CD8-positive, alpha-beta T cell (primary cell): ENCODE measurements at regions of chr22 and their contacts with region 1.

Region 1: DNA sequence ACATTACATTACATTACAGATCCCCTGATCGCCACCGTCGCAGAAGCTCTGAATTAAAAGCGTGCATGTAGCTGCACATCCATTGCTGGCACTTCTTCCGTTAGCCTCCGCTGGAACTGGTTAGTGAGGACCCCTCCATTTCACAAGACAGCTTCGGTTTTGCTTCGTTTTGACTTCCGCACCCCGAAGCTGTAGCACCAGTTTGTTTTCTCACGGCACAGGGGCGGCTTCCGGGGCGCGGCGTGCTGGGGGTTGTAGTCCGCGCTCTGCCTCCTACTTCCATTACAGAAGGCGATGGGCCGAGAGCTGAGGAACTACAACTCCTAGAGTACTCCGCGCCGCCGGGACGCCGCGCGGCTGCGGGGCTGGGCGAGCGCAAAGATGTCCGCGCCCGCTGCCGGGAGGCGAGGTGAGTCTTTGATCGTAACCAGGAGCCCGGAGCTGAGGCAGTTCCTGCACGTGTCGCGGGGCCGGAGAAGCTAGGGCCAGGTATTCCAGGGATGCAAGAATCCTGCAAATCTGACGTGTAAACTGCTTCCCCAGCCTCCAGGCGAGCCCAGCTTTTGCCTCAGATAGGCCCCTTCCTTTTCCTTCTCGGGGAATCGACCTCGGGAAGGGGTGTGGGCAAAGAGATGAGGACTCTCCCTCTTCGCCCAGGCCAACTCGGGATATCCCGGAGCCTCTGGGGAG is at the start of gene PEX26:
- DNase-seq: peak; percentile 91 to 98 (median 94)
- ATAC-seq: peak; percentile 97
- H3K4me3 ChIP-seq: peak within 1 kb of the TSS; percentile 89 to 99
- H3K4me3 Mint-ChIP-seq: peak within 1 kb of the TSS; percentile 98
- H3K27ac ChIP-seq: peak within 1 kb of the TSS; percentile 78 to 91
- H3K27ac Mint-ChIP-seq: peak within 1 kb of the TSS; percentile 100
- H3K4me1 ChIP-seq: peaks cover 30% of the 10 kb centered on the region
- H3K4me1 Mint-ChIP-seq: peaks cover 55% of the 10 kb centered on the region
- H3K27me3 ChIP-seq: no peaks in the 10 kb centered on the region
- H3K27me3 Mint-ChIP-seq: no peaks in the 10 kb centered on the region
- CTCF ChIP-seq: no peak
- total RNA-seq, gene PEX26: 22.5 to 23.0 TPM

Region 2: DNA sequence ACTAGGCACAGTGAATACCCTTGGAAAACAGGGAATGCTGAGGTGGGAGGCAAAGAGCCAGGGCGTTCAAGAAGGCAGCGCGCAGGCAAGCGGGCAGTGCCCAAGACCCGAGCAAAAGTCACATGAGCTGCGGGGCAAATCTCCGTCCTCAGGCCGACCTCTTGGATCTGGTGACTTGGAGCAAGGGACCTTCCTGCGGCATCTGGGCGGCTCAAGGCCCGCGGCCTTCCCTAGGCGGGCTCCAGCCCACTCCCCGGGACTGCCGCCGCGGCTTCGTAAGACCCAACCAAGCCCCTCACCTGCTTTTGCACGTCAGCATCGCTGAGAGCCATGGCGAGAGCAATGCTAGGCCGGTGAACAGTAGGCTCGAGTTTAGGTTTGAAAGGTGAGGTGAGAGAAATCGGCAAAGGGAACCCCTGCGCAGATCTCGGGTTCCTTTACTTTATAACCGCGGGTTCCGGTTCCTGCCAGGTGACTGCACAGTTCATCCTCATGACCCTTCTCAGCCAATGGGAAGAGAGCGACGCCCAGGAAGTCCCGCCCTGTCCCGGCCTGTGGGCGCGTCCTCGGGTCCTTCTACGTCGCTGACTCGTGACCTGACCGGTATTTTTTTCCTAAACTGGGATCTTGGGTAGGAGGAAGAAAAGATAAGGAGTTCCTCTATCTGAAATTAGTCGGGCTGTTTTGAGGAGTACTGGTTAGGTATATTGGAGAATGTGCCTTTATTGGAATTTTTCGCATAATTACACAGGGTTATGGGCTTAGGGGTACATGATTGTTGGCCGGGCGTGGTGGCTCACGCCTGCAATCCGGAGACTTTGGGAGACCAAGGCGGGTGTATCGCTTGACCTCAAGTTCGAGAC is 449.2 kb before region 1 on chr22 and contains the start of gene ATP6V1E1:
- CTCF ChIA-PET with region 1: no interaction called
- POLR2A ChIA-PET with region 1: no interaction called
- intact Hi-C with region 1: loop called in 1 of 2 experiments (anchors 2 kb)
- DNase-seq: peak; percentile 90 to 97 (median 94)
- ATAC-seq: peak; percentile 100
- H3K4me3 ChIP-seq: peak within 1 kb of the TSS; percentile 84 to 100
- H3K4me3 Mint-ChIP-seq: peak within 1 kb of the TSS; percentile 97
- H3K27ac ChIP-seq: peak within 1 kb of the TSS; percentile 93 to 94
- H3K27ac Mint-ChIP-seq: peak within 1 kb of the TSS; percentile 99
- H3K4me1 ChIP-seq: peaks cover 23% of the 10 kb centered on the region
- H3K4me1 Mint-ChIP-seq: peaks cover 33% of the 10 kb centered on the region
- H3K27me3 ChIP-seq: no peaks in the 10 kb centered on the region
- H3K27me3 Mint-ChIP-seq: no peaks in the 10 kb centered on the region
- CTCF ChIP-seq: no peak
- total RNA-seq, gene ATP6V1E1: 49.8 to 53.0 TPM

Region 3: GRCh38 chr22:17742527-17742902 is 335.3 kb before region 1 on chr22:
- CTCF ChIA-PET with region 1: interaction called, 7 read pairs
- POLR2A ChIA-PET with region 1: interaction called, 8 read pairs
- intact Hi-C with region 1: loop called in 1 of 2 experiments (anchors 1 kb)
- DNase-seq: peak; percentile 44 to 83 (median 67)
- ATAC-seq: peak; percentile 85
- H3K4me3 ChIP-seq: no peak overlapping the region
- H3K4me3 Mint-ChIP-seq: no peak overlapping the region
- H3K27ac ChIP-seq: no peak overlapping the region
- H3K27ac Mint-ChIP-seq: no peak overlapping the region
- H3K4me1 ChIP-seq: no peaks in the 10 kb centered on the region
- H3K4me1 Mint-ChIP-seq: peaks cover 7% of the 10 kb centered on the region
- H3K27me3 ChIP-seq: no peaks in the 10 kb centered on the region
- H3K27me3 Mint-ChIP-seq: no peaks in the 10 kb centered on the region
- CTCF ChIP-seq: peak; percentile 79

Region 4: GRCh38 chr22:17830043-17830961 is 247.5 kb before region 1 on chr22:
- CTCF ChIA-PET with region 1: interaction called, 140 read pairs
- POLR2A ChIA-PET with region 1: interaction called, 12 read pairs
- intact Hi-C with region 1: loop called in 1 of 2 experiments (anchors 1 kb)
- DNase-seq: peak; percentile 63 to 89 (median 83)
- ATAC-seq: peak; percentile 97
- H3K4me3 ChIP-seq: no peak overlapping the region
- H3K4me3 Mint-ChIP-seq: no peak overlapping the region
- H3K27ac ChIP-seq: no peak overlapping the region
- H3K27ac Mint-ChIP-seq: no peak overlapping the region
- H3K4me1 ChIP-seq: no peaks in the 10 kb centered on the region
- H3K4me1 Mint-ChIP-seq: peaks cover 8% of the 10 kb centered on the region
- H3K27me3 ChIP-seq: no peaks in the 10 kb centered on the region
- H3K27me3 Mint-ChIP-seq: no peaks in the 10 kb centered on the region
- CTCF ChIP-seq: peak; percentile 100

Region 5: GRCh38 chr22:18024276-18024947 is 53.4 kb before region 1 on chr22 and contains the start of gene MICAL3:
- CTCF ChIA-PET with region 1: interaction called, 10 read pairs
- POLR2A ChIA-PET with region 1: interaction called, 3 read pairs
- intact Hi-C with region 1: loop called (anchors 1 kb)
- DNase-seq: peak; percentile 41 to 82 (median 56)
- ATAC-seq: peak; percentile 93
- H3K4me3 ChIP-seq: peak within 1 kb of the TSS; percentile 27 to 60
- H3K4me3 Mint-ChIP-seq: peak within 1 kb of the TSS; percentile 90
- H3K27ac ChIP-seq: no peak within 1 kb of the TSS
- H3K27ac Mint-ChIP-seq: no peak within 1 kb of the TSS
- H3K4me1 ChIP-seq: peaks cover 5% of the 10 kb centered on the region
- H3K4me1 Mint-ChIP-seq: peaks cover 14% of the 10 kb centered on the region
- H3K27me3 ChIP-seq: peaks cover 10 to 12% of the 10 kb centered on the region in 2 experiments
- H3K27me3 Mint-ChIP-seq: peaks cover 43% of the 10 kb centered on the region
- CTCF ChIP-seq: peak; percentile 47
- total RNA-seq, gene MICAL3: 7.0 to 11.7 TPM

Region 6: DNA sequence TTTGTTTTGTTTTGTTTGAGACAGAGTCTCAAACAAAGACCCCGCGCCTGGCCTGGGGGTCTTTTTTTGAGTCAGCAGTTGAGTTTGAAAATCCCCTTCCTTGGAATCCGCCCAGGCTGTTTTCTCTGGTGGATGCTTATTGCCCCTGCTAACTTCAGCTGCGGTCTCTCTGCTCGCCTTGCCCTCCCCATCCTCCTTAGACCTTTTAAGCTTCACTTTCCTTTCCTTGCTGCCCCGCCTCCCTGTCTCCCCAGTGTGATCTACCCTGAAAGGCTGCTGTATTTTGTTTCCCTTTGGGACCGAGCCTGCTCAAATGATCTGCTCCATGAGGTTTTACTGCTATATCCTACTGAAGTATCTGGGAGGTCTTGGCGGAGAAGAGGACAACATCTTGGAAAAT is 74.7 kb after region 1 on chr22:
- CTCF ChIA-PET with region 1: no interaction called
- POLR2A ChIA-PET with region 1: interaction called, 11 read pairs
- intact Hi-C with region 1: loop called (anchors 1 to 2 kb)
- DNase-seq: peak in 5 of 9 experiments; percentile 16 to 64 (median 36)
- ATAC-seq: peak; percentile 54
- H3K4me3 ChIP-seq: no peak overlapping the region
- H3K4me3 Mint-ChIP-seq: peak overlapping the region; percentile 48
- H3K27ac ChIP-seq: no peak overlapping the region
- H3K27ac Mint-ChIP-seq: peak overlapping the region; percentile 66
- H3K4me1 ChIP-seq: peaks cover 28% of the 10 kb centered on the region
- H3K4me1 Mint-ChIP-seq: peaks cover 41% of the 10 kb centered on the region
- H3K27me3 ChIP-seq: no peaks in the 10 kb centered on the region
- H3K27me3 Mint-ChIP-seq: no peaks in the 10 kb centered on the region
- CTCF ChIP-seq: no peak

Region 7: DNA sequence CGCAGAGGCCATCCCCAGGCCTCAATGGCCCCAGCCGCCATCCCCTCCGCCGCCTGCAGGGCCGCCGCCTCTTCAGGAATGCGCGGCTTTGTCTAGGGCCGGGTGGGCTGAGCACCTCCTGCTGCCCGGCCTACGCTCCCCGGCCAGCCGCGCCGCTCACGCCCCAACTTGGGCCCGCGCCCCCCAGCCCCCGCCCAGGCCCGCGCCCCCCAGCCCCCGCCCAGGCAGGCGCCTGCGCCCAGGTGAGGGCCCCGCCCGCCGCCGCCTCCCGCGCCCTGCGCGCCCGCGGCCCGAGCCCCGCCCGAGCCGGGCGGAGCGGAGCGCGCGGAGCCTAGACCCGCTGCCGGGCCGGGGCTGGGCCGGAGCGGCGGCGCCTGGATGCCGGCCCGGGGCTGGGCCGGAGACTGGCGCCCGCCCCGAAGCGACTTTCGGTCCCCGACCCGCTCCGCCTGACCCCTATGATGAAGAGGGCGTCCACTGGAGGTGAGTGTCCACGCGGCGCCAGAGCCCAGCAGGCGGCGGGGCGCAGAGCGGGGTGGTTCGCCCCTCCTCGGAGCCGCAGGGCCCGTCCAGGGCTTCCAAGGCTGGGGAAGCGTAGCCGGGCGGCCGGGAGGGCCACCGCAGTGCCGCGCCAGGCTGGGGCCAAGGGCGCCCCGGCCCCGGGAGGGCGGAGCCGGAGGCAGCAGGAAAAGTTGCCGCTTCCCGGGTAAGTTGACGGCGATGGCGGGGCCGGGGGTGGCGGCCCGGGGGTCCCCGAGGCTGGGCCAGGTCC is 892.6 kb after region 1 on chr22:
- CTCF ChIA-PET with region 1: no interaction called
- POLR2A ChIA-PET with region 1: no interaction called
- intact Hi-C with region 1: no loop called
- DNase-seq: no peak
- ATAC-seq: peak; percentile 49
- H3K4me3 ChIP-seq: no peak overlapping the region
- H3K4me3 Mint-ChIP-seq: no peak overlapping the region
- H3K27ac ChIP-seq: no peak overlapping the region
- H3K27ac Mint-ChIP-seq: no peak overlapping the region
- H3K4me1 ChIP-seq: no peaks in the 10 kb centered on the region
- H3K4me1 Mint-ChIP-seq: peaks cover 2% of the 10 kb centered on the region
- H3K27me3 ChIP-seq: peaks cover 0 to 2% of the 10 kb centered on the region in 2 experiments
- H3K27me3 Mint-ChIP-seq: peaks cover 12% of the 10 kb centered on the region
- CTCF ChIP-seq: no peak